HepG2 (cell line): ENCODE measurements at regions of chr3 and their contacts with region 1.

Region 1: DNA sequence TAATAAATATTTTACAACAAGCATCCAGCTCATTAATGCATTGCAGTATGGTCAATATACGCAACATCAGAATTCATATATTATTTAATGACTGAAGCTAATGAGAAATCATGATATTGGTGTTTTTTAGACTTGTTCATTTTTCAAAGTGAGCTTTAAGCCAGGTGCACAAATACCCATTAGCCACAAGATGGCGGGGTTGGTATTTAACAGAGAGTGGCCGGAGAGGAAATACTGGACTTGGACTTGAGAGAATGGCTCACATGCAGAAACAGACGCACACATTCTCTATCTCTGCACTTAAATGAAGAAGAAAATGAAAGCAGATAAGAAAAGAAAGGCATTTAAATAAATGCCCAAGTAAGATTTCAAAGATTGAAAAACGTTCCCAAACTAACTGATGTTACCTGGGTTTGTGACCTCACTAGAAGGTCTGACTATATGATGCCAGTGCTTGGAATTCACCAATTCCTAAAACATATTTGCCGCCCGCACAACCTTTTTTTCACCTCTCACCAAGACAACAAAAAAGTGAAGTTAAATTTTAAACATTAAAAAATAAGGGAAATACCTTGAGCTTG is 21.2 kb upstream of the CRBN start:
- DNase-seq: peak; percentile 71
- ATAC-seq: peak; percentile 80
- H3K4me3 ChIP-seq: no peak overlapping the region
- H3K27ac ChIP-seq: no peak overlapping the region
- H3K4me1 ChIP-seq: no peaks in the 10 kb centered on the region
- H3K27me3 ChIP-seq: peaks cover 0 to 1% of the 10 kb centered on the region in 2 experiments; a peak in 1 of 5 replicates
- CTCF ChIP-seq: peak; percentile 82
- EP300 ChIP-seq: no peak
- POLR2A ChIP-seq: no peak
- RAD21 ChIP-seq: 0 out of 2 replicates have a peak, but pooled peaks have one; percentile 27

Region 2: DNA sequence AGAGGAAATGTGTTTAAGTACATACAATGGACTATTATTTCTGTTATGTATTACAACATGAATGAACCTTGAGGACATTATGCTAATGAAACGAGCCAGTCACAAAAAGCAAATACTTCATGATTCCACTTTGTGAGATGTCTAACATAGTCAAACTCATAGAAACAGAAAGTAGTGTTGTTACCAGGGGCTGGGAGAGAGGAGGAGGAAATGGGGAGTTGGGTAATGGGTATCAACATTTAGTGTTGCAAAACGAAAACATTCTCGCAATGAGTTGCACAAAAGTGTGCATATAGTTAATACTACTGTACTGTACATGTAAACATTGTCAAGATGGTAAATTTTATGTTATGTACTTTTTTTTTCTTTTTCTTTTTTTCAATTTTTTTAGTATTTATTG is 284.9 kb before region 1 on chr3:
- CTCF ChIA-PET with region 1: no interaction called
- POLR2A ChIA-PET with region 1: no interaction called
- in situ Hi-C with region 1: no loop called
- intact Hi-C with region 1: no loop called
- DNase-seq: no peak
- ATAC-seq: no peak
- H3K4me3 ChIP-seq: no peak overlapping the region
- H3K27ac ChIP-seq: no peak overlapping the region
- H3K4me1 ChIP-seq: no peaks in the 10 kb centered on the region
- H3K27me3 ChIP-seq: no peaks in the 10 kb centered on the region
- CTCF ChIP-seq: no peak
- EP300 ChIP-seq: no peak
- POLR2A ChIP-seq: no peak
- RAD21 ChIP-seq: no peak

Region 3: GRCh38 chr3:3998140-3998922 is 797.6 kb after region 1 on chr3:
- CTCF ChIA-PET with region 1: interaction called, 14 read pairs
- POLR2A ChIA-PET with region 1: no interaction called
- in situ Hi-C with region 1: loop called (anchors 10 kb)
- intact Hi-C with region 1: loop called (anchors 1 kb)
- DNase-seq: peak; percentile 52
- ATAC-seq: peak; percentile 81
- H3K4me3 ChIP-seq: no peak overlapping the region
- H3K27ac ChIP-seq: no peak overlapping the region
- H3K4me1 ChIP-seq: no peaks in the 10 kb centered on the region
- H3K27me3 ChIP-seq: no peaks in the 10 kb centered on the region
- CTCF ChIP-seq: peak; percentile 80
- EP300 ChIP-seq: no peak
- POLR2A ChIP-seq: no peak
- RAD21 ChIP-seq: peak; percentile 24; the same call in 1 of the 2 replicates

Region 4: GRCh38 chr3:4006288-4006687 is 805.6 kb after region 1 on chr3:
- CTCF ChIA-PET with region 1: no interaction called
- POLR2A ChIA-PET with region 1: no interaction called
- in situ Hi-C with region 1: loop called (anchors 10 kb)
- intact Hi-C with region 1: no loop called
- DNase-seq: no peak
- ATAC-seq: no peak
- H3K4me3 ChIP-seq: no peak overlapping the region
- H3K27ac ChIP-seq: no peak overlapping the region
- H3K4me1 ChIP-seq: no peaks in the 10 kb centered on the region
- H3K27me3 ChIP-seq: no peaks in the 10 kb centered on the region
- CTCF ChIP-seq: no peak
- EP300 ChIP-seq: no peak
- POLR2A ChIP-seq: no peak
- RAD21 ChIP-seq: no peak

Region 5: DNA sequence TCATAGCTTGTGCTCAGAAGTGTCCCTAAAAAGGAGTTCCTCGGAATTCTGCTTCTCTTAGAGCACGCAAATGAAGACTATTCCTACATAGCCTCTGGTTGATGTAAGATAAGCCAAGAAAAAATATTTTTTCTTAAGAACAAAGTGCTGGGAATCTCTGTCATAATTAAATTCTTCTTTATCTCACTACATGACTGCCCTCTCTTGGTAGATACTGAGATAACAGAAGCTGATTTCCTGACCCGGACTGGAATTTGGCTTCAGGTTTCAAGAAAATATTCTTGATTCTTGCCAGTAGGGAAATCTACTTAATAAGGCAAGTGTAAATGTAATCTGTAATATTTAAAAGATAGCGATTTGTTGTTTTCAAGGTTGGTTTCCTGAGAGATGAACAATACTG is 1071.1 kb after region 1 on chr3:
- CTCF ChIA-PET with region 1: interaction called, 10 read pairs
- POLR2A ChIA-PET with region 1: no interaction called
- in situ Hi-C with region 1: no loop called
- intact Hi-C with region 1: loop called (anchors 1 kb)
- DNase-seq: peak; percentile 8
- ATAC-seq: peak; percentile 43; the same call in 1 of the 3 replicates
- H3K4me3 ChIP-seq: no peak overlapping the region
- H3K27ac ChIP-seq: no peak overlapping the region
- H3K4me1 ChIP-seq: no peaks in the 10 kb centered on the region
- H3K27me3 ChIP-seq: no peaks in the 10 kb centered on the region
- CTCF ChIP-seq: peak; percentile 45
- EP300 ChIP-seq: no peak
- POLR2A ChIP-seq: no peak
- RAD21 ChIP-seq: no peak

Region 6: GRCh38 chr3:4290272-4290893 is 1089.7 kb after region 1 on chr3:
- CTCF ChIA-PET with region 1: interaction called, 22 read pairs
- POLR2A ChIA-PET with region 1: no interaction called
- in situ Hi-C with region 1: loop called (anchors 5 kb)
- intact Hi-C with region 1: loop called (anchors 1 kb)
- DNase-seq: peak; percentile 10
- ATAC-seq: no peak
- H3K4me3 ChIP-seq: no peak overlapping the region
- H3K27ac ChIP-seq: no peak overlapping the region
- H3K4me1 ChIP-seq: no peaks in the 10 kb centered on the region
- H3K27me3 ChIP-seq: no peaks in the 10 kb centered on the region
- CTCF ChIP-seq: peak; percentile 74
- EP300 ChIP-seq: no peak
- POLR2A ChIP-seq: no peak
- RAD21 ChIP-seq: no peak